ENCODE measurements at regions of chr22 and their contacts with region 1.

Region 1: DNA sequence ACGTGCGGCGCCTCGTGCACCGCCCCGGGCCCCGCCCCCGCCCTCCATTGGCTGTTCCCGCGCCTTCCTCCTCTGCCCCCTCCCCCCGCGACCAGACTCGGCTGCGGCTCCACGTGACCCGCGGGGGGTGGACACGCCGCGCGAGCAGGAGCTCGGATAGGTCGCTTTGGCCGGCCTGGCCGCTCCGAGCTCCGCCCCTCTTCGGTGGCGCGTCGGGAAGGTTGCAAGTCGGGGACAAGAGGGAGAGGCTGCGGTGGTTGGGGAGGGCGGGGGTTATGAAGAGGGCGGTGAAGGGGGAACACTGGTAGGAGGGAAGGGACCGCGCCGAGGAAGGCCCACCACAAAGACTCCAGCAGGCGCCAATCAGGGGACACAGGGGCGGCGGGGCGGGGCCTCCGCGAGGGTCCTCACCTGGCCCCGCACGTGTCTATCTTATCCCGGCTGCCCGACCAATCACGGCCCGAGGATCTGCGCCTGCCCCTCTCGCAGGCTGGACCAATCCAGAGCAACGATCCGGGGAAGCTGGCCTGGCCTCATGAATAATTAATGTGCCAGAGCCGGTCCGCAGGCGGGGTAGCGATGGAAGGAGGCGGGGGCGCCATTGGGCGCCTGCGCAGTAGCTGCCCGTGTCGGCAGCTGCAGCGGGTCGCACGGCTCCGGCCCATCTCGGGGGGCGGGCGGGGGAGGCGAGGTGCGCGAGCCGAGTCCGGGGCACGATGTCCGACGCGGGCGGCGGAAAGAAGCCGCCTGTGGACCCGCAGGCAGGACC is at the start of gene TEF:
- DNase-seq: peak; percentile 96 to 99 (median 98)
- ATAC-seq: peak; percentile 79
- H3K4me3 ChIP-seq: peak within 1 kb of the TSS; percentile 66
- H3K4me3 Mint-ChIP-seq: peak within 1 kb of the TSS; percentile 98
- H3K27ac ChIP-seq: peak within 1 kb of the TSS; percentile 78 to 96
- H3K27ac Mint-ChIP-seq: peak within 1 kb of the TSS; percentile 99
- H3K4me1 ChIP-seq: peaks cover 20% of the 10 kb centered on the region
- H3K4me1 Mint-ChIP-seq: peaks cover 31% of the 10 kb centered on the region
- H3K27me3 ChIP-seq: no peaks in the 10 kb centered on the region
- H3K27me3 Mint-ChIP-seq: no peaks in the 10 kb centered on the region
- CTCF ChIP-seq: no peak
- total RNA-seq, gene TEF: 2.4 to 2.6 TPM

Region 2: DNA sequence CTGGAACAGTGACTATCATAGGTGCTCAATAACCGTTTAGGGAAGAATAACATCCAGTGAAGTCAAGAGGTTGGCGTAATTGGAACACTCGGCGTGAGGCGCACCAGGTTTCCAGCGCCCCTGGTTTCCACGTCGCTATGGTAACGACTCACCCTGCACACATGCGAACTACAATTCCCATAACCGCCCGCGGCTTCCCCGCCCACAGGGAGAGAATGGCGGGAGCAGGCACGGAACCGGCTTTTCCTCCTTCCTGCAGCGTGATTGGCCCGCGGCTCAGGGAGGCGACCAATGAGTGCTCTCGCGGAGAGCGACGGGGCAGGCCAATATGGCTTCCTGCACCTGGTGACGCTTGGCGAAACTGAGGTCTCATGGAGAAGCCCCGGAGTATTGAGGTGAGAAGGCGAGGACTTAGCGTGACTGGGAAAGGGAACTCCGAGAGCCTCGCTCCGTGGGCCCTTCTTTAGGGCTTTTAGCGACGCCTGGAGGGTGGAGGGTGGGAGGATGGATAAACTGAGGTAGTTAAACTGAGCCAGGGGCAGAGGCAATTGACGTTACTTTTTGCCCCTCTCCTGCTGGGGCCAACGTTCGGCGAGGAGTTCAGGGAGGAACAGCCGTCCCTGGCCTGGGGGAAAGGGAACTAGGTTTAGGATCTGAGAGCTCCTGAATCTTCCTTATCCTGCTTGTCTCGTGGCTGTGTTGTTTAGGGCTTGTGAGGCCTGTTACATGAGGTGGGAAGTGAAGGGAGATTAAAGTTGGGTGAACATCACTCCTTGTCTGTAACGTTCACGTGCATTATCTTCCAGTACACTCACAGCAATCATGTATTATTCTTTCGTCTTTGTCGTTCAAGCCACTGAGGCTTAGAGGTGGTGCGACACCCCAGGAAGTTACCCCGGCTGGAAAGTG is 176.3 kb before region 1 on chr22 and contains the start of gene L3MBTL2:
- CTCF ChIA-PET with region 1: no interaction called
- POLR2A ChIA-PET with region 1: no interaction called
- intact Hi-C with region 1: loop called in 1 of 2 experiments (anchors 5 kb)
- DNase-seq: peak; percentile 95 to 99 (median 98)
- ATAC-seq: peak; percentile 100
- H3K4me3 ChIP-seq: peak within 1 kb of the TSS; percentile 96
- H3K4me3 Mint-ChIP-seq: peak within 1 kb of the TSS; percentile 97
- H3K27ac ChIP-seq: peak within 1 kb of the TSS; percentile 59 to 82
- H3K27ac Mint-ChIP-seq: peak within 1 kb of the TSS; percentile 87
- H3K4me1 ChIP-seq: peaks cover 23% of the 10 kb centered on the region
- H3K4me1 Mint-ChIP-seq: peaks cover 23% of the 10 kb centered on the region
- H3K27me3 ChIP-seq: peaks cover 0 to 6% of the 10 kb centered on the region in 2 experiments
- H3K27me3 Mint-ChIP-seq: no peaks in the 10 kb centered on the region
- CTCF ChIP-seq: no peak
- total RNA-seq, gene L3MBTL2: 16.4 to 17.5 TPM

Region 3: GRCh38 chr22:41301105-41302020 is 80.2 kb before region 1 on chr22 and contains the start of gene ZC3H7B:
- CTCF ChIA-PET with region 1: interaction called, 6 read pairs
- POLR2A ChIA-PET with region 1: interaction called, 32 read pairs
- intact Hi-C with region 1: loop called in 1 of 2 experiments (anchors 5 kb)
- DNase-seq: peak; percentile 71 to 95 (median 79)
- ATAC-seq: peak; percentile 97
- H3K4me3 ChIP-seq: peak within 1 kb of the TSS; percentile 97
- H3K4me3 Mint-ChIP-seq: peak within 1 kb of the TSS; percentile 84
- H3K27ac ChIP-seq: peak within 1 kb of the TSS; percentile 82 to 83
- H3K27ac Mint-ChIP-seq: peak within 1 kb of the TSS; percentile 92
- H3K4me1 ChIP-seq: peaks cover 30% of the 10 kb centered on the region
- H3K4me1 Mint-ChIP-seq: peaks cover 33% of the 10 kb centered on the region
- H3K27me3 ChIP-seq: no peaks in the 10 kb centered on the region
- H3K27me3 Mint-ChIP-seq: no peaks in the 10 kb centered on the region
- CTCF ChIP-seq: peak; percentile 63
- total RNA-seq, gene ZC3H7B: 29.5 to 32.7 TPM

Region 4: DNA sequence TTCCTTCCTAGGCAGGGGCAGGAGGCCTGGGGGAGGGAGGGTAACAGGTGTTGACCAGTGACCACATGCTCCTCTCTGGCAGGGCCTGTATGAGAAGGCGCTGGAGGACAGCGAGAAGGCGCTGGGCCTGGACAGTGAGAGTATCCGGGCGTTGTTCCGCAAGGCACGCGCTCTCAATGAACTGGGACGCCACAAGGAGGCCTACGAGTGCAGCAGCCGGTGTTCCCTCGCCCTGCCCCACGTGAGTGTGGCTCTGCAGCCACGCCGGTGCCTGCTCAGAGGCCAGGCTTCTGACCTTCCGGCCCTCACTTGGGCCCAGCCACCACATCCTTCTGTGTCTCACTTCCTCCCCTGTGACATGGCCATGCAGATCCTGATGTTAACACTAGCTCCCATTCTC is 54.4 kb before region 1 on chr22:
- CTCF ChIA-PET with region 1: no interaction called
- POLR2A ChIA-PET with region 1: no interaction called
- intact Hi-C with region 1: no loop called
- DNase-seq: no peak
- ATAC-seq: no peak
- H3K4me3 ChIP-seq: no peak overlapping the region
- H3K4me3 Mint-ChIP-seq: no peak overlapping the region
- H3K27ac ChIP-seq: no peak overlapping the region
- H3K27ac Mint-ChIP-seq: no peak overlapping the region
- H3K4me1 ChIP-seq: no peaks in the 10 kb centered on the region
- H3K4me1 Mint-ChIP-seq: no peaks in the 10 kb centered on the region
- H3K27me3 ChIP-seq: no peaks in the 10 kb centered on the region
- H3K27me3 Mint-ChIP-seq: no peaks in the 10 kb centered on the region
- CTCF ChIP-seq: no peak

Region 5: GRCh38 chr22:41411021-41411851 is 29.7 kb after region 1 on chr22:
- CTCF ChIA-PET with region 1: no interaction called
- POLR2A ChIA-PET with region 1: no interaction called
- intact Hi-C with region 1: no loop called
- DNase-seq: no peak
- ATAC-seq: no peak
- H3K4me3 ChIP-seq: no peak overlapping the region
- H3K4me3 Mint-ChIP-seq: peak overlapping the region; percentile 72
- H3K27ac ChIP-seq: peak overlapping the region in 1 of 2 donors; percentile 65
- H3K27ac Mint-ChIP-seq: peak overlapping the region; percentile 100
- H3K4me1 ChIP-seq: peaks cover 46% of the 10 kb centered on the region
- H3K4me1 Mint-ChIP-seq: peaks cover 32% of the 10 kb centered on the region
- H3K27me3 ChIP-seq: no peaks in the 10 kb centered on the region
- H3K27me3 Mint-ChIP-seq: no peaks in the 10 kb centered on the region
- CTCF ChIP-seq: no peak

Region 6: DNA sequence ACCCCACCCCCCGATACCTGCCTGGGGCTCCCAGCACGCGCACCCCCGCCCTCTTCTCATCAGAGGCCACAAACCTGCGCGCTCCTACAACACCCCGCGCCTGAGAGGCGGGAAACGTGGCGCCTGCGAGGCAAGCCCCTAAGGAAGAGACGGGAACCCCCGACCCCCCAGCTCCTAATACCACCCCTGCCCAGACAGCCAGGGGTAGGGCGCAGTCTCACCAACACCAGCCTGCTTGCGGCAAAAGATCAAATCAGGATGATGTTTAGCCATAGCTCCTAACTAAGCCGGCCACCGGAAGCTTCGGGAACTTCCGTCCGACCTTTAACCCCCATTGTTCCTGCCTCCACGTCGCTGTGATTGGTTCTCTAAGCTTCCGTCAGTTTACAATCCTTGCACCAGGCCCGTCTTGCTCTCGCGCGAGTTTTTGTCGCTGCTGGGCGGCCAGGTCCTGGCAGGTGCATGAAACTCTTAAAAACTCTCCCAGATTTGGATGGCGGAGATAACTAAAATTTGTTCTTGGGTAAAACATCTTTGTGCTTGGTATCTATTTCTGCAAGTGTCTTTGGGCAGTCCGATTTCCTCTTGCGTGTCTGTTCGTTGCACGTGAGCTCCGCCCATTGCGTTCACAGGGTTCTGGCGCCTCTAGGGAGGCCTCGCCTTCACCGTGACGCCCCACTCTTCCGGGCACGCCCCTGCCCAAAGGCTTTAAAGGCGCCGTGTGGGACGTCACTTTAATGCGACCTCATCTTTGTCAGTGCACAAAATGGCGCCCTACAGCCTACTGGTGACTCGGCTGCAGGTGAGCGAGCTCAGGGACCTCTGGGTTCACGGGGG is 87.1 kb after region 1 on chr22 and contains the starts of genes ACO2 and PHF5A:
- CTCF ChIA-PET with region 1: interaction called, 3 read pairs
- POLR2A ChIA-PET with region 1: interaction called, 34 read pairs
- intact Hi-C with region 1: loop called in 1 of 2 experiments (anchors 1 kb)
- DNase-seq: peak; percentile 95 to 99 (median 98)
- ATAC-seq: peak; percentile 92
- H3K4me3 ChIP-seq: peak within 1 kb of the TSS; percentile 94
- H3K4me3 Mint-ChIP-seq: peak within 1 kb of the TSS; percentile 89
- H3K27ac ChIP-seq: peak within 1 kb of the TSS; percentile 94 to 98
- H3K27ac Mint-ChIP-seq: peak within 1 kb of the TSS; percentile 97
- H3K4me1 ChIP-seq: peaks cover 27% of the 10 kb centered on the region
- H3K4me1 Mint-ChIP-seq: peaks cover 62% of the 10 kb centered on the region
- H3K27me3 ChIP-seq: no peaks in the 10 kb centered on the region
- H3K27me3 Mint-ChIP-seq: no peaks in the 10 kb centered on the region
- CTCF ChIP-seq: no peak
- total RNA-seq, gene ACO2: 69.5 to 71.9 TPM
- total RNA-seq, gene PHF5A: 41.3 to 44.2 TPM

Region 7: DNA sequence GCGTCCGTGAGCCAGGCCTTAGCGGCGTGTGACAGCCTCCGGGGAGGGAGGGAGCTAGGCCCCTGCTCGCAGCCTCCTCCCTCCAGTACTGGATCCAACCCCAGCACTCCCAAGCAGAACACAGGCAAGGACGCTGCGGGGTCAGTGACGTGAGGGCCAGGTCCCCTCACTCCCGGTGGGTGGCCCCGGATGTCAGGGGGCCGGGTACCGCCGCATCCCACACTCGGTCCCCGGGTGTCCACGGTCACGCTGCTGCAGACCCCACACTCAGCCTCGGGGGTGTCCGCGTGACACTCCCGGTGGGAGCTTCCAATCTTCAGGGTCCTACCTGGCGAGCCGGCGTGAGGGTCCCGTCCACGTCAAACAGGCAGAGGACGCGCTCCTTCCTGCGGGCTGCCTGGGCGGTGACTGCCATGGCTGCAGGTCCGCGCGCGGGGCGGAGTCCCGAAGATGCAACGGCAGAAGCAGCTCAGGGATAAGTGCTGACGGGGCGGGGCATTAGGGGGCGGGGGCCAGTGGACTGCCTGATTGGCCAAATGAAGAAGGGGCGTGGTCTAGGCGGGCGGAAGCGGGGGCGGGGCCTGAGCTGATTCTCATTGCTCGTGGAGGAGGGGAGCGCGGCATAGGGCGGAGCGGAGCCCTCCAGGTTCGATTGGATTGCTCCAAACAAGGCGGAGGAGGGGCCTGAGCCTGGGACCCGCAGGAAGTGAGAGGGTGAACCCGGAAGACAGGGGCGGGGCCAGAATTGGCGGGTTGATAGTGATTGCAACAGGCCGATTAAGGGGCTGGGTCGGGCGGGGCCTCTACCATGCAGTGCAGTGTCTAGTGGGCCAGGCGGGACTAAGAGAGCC is 208.1 kb after region 1 on chr22 and contains the start of gene PMM1:
- CTCF ChIA-PET with region 1: no interaction called
- POLR2A ChIA-PET with region 1: interaction called, 24 read pairs
- intact Hi-C with region 1: loop called in 1 of 2 experiments (anchors 2 kb)
- DNase-seq: peak; percentile 100
- ATAC-seq: peak; percentile 97
- H3K4me3 ChIP-seq: peak within 1 kb of the TSS; percentile 98
- H3K4me3 Mint-ChIP-seq: peak within 1 kb of the TSS; percentile 82
- H3K27ac ChIP-seq: peak within 1 kb of the TSS; percentile 29 to 64
- H3K27ac Mint-ChIP-seq: peak within 1 kb of the TSS; percentile 47
- H3K4me1 ChIP-seq: peaks cover 21% of the 10 kb centered on the region
- H3K4me1 Mint-ChIP-seq: peaks cover 17% of the 10 kb centered on the region
- H3K27me3 ChIP-seq: no peaks in the 10 kb centered on the region
- H3K27me3 Mint-ChIP-seq: no peaks in the 10 kb centered on the region
- CTCF ChIP-seq: no peak
- total RNA-seq, gene PMM1: 24.8 to 25.5 TPM